PC-3 (cell line): ENCODE measurements at regions of chr9 and their contacts with region 1.

Region 1: DNA sequence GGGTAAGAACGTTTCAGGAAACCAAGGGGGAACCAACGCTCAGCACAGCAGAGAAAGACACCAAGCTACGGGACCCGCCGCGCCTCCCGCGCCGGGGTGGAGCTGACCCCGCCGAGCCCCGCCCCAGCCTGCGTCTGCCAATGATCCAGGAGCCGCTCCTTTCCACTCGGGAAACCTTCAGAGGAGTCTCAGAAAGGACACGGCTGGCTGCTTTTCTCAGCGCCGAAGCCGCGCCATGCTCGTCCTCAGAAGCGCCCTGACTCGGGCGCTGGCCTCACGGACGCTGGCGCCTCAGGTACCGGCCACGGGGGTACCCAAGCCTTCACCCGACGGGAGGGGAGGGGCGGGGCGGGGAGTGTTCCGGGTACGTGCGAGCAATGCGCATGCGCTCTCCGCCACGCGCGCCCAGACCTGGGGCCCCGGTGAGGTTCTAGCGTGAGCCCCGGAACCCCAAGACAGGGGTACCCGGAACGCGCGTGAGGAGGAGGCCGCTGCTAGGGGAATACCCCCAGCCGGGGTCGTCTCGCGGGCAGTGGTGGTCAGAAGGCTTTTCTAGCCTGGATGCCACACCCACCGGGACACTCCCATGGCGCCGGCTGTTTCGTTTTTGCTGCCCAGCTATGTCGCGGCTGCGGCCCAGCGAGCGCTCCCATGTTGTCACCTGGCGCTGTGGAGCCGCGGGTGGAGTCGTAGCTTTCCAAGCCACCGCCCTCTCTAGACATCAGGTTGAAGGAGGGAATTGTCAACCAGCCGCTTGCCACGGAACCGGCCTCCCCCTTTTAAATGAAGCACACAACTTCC is at the start of gene NIPSNAP3A:
- DNase-seq: peak; percentile 62
- ATAC-seq: peak; percentile 86
- H3K4me3 ChIP-seq: peak within 1 kb of the TSS; percentile 88
- H3K27ac ChIP-seq: peak within 1 kb of the TSS; percentile 76
- H3K4me1 ChIP-seq: peaks cover 13% of the 10 kb centered on the region
- H3K27me3 ChIP-seq: no peaks in the 10 kb centered on the region
- CTCF ChIP-seq: no peak
- total RNA-seq, gene NIPSNAP3A: 8.6 and 9.1 TPM in 2 replicates

Region 2: DNA sequence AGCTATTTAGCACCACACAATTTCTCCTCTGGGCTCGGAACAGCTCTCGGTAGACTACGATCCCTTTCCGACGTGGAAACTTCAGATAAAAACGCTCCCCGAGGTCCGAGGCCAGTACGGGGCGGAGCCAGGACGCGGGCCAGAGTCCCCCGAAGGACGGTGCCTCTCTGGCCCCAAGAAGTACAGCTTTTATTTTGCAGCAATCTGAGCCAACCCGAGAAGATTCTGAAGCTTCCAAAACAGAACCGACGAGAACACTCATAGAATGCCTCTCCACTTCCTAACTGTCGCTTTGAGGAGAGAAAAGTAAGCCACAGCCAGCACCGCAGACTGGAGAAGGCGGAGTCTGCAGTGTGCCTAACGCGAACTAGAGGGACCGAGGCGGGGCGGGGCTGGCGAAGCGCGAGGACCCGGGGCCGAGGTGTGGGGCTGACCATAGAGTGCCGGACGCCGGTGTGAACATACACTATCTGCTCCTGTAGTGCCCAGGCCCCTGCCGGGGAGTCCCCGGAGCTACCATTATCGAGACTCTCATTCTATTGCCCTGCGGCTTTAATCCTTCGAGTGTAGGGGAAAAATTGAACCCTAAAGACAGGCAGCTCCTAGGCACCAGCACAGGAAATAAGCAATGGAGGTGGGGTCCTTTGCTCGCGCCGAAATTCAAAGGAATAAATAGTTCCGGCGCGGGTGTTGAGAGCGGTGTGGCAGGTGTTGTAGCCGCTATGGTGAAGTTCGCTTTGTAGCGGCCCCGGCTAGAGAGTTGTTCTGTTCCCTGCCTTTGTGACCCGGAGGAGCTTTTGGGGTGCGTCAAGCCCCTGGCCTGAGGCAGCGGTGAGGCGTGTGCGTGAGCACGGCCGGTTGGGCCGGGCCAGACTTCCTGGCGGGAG is 653.9 kb before region 1 on chr9 and contains the start of gene SMC2:
- CTCF ChIA-PET with region 1: no interaction called
- POLR2A ChIA-PET with region 1: interaction called, 3 read pairs
- intact Hi-C with region 1: loop called (anchors 5 kb)
- DNase-seq: peak; percentile 78
- ATAC-seq: peak; percentile 84
- H3K4me3 ChIP-seq: peak within 1 kb of the TSS; percentile 98
- H3K27ac ChIP-seq: peak within 1 kb of the TSS; percentile 87
- H3K4me1 ChIP-seq: peaks cover 30% of the 10 kb centered on the region
- H3K27me3 ChIP-seq: no peaks in the 10 kb centered on the region
- CTCF ChIP-seq: no peak
- total RNA-seq, gene SMC2: 19.2 and 20.7 TPM in 2 replicates

Region 3: DNA sequence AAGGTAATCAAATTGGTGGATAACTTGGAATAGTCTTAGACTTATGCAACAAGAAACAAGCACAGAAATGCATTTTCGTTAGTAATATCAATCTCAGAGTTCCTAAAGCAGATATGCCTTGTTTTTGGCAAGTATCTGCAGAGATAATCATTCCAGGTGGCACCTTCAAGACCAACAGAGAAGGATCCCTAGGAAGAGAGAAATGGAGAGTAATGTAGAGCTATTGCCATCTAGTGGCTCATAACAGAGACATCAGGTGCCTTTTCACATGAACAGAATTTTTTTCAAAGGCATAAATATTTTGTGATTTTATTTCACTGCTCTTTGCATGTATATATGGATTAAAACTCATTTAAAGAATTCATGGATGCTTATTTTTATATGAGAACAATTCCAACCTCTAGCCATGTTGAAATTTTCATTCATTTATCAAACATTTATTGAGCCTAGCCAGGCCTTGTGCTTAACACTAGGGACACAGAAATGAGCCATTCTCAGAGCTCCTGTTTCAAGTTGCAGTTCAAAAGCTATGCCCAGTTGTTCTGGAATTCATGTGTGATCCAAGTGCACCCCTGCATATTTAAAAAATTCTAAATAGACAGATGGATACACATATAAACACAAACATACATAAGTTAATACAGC is 361.2 kb before region 1 on chr9:
- CTCF ChIA-PET with region 1: no interaction called
- POLR2A ChIA-PET with region 1: no interaction called
- intact Hi-C with region 1: loop called (anchors 5 kb)
- DNase-seq: peak; percentile 43
- ATAC-seq: 0 out of 2 replicates have a peak, but pooled peaks have one; percentile 45
- H3K4me3 ChIP-seq: no peak overlapping the region
- H3K27ac ChIP-seq: no peak overlapping the region
- H3K4me1 ChIP-seq: no peaks in the 10 kb centered on the region
- H3K27me3 ChIP-seq: no peaks in the 10 kb centered on the region
- CTCF ChIP-seq: peak; percentile 70

Region 4: GRCh38 chr9:104608336-104608735 is 139.4 kb before region 1 on chr9:
- CTCF ChIA-PET with region 1: no interaction called
- POLR2A ChIA-PET with region 1: no interaction called
- intact Hi-C with region 1: loop called (anchors 1 kb)
- DNase-seq: peak; percentile 13
- ATAC-seq: no peak
- H3K4me3 ChIP-seq: no peak overlapping the region
- H3K27ac ChIP-seq: no peak overlapping the region
- H3K4me1 ChIP-seq: 0 out of 2 replicates have a peak, but pooled peaks cover 6% of the 10 kb centered on the region
- H3K27me3 ChIP-seq: 0 out of 2 replicates have a peak, but pooled peaks cover 5% of the 10 kb centered on the region
- CTCF ChIP-seq: peak; percentile 48; the same call in 1 of the 2 replicates

Region 5: DNA sequence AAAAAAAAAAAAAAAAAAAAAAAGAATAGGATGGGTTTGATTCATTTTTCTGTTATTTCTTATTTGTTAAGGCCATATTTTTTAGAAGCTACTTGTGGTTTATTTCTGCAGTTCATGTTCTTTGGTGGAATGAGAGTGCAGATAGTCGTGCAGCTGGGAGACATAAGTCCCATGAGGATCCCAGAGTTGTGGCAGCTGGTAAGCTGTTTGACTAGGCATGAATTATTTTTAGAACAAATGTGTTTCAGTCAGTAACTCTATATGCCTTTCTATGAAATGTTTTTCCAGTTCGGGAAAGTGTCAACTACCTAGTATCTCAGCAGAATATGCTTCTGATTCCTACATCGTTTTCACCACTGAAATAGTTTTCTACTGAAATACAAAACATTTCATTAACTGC is 11.2 kb after region 1 on chr9:
- CTCF ChIA-PET with region 1: interaction called, 14 read pairs
- POLR2A ChIA-PET with region 1: no interaction called
- intact Hi-C with region 1: no loop called
- DNase-seq: no peak
- ATAC-seq: no peak
- H3K4me3 ChIP-seq: no peak overlapping the region
- H3K27ac ChIP-seq: no peak overlapping the region
- H3K4me1 ChIP-seq: no peaks in the 10 kb centered on the region
- H3K27me3 ChIP-seq: no peaks in the 10 kb centered on the region
- CTCF ChIP-seq: no peak